ENCODE measurements at regions of chr12 and their contacts with region 1.

Region 1: DNA sequence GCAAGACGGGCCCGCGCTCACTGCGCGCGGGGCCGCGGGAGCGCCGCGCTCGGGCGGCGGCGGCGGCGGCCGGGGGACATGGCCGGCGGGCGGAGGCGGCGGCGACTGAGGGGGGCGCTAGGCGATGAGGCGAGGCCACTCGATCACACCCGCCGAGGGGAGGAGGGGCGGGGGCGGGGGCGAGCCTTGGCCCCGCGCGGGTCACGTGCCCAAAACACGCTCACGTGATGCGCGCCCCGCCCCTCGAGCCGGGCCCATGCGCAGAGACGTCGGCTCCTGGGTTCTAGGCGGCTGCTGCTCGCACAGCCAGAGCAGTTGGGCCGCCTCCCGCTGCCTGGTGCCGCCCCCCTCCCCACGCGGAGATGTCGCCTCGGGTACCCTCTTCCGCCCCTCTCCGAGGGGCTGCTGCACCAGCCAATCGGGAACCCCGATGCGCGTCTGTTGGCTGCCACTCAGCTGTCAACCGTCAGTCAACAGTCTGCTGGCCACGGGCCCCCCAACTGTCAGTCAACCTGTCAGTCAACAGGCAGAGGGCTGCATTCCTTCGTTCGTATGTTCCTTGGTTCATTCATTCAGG is at the start of gene SPPL3:
- DNase-seq: peak; percentile 79 to 96 (median 87)
- ATAC-seq: peak; percentile 93
- H3K4me3 ChIP-seq: peak within 1 kb of the TSS; percentile 88
- H3K4me3 Mint-ChIP-seq: peak within 1 kb of the TSS; percentile 95 to 100 (median 99)
- H3K27ac ChIP-seq: peak within 1 kb of the TSS; percentile 90
- H3K27ac Mint-ChIP-seq: peak within 1 kb of the TSS; percentile 92 to 99 (median 95)
- H3K4me1 ChIP-seq: peaks cover 6 to 14% of the 10 kb centered on the region in 2 donors
- H3K4me1 Mint-ChIP-seq: peaks cover 25 to 42% (median 34%) of the 10 kb centered on the region in 7 donors
- H3K27me3 ChIP-seq: no peaks in the 10 kb centered on the region
- H3K27me3 Mint-ChIP-seq: no peaks in the 10 kb centered on the region
- total RNA-seq, gene SPPL3: 34.9 to 51.8 (median 48.2) TPM

Region 2: GRCh38 chr12:120534203-120534702 is 370.0 kb before region 1 on chr12 and contains the start of gene RNF10:
- CTCF ChIA-PET with region 1: interaction called, 5 read pairs
- POLR2A ChIA-PET with region 1: no interaction called
- intact Hi-C with region 1: loop called in 1 of 2 experiments (anchors 1 kb)
- DNase-seq: peak; percentile 61 to 88 (median 85)
- ATAC-seq: peak; percentile 84
- H3K4me3 ChIP-seq: peak within 1 kb of the TSS; percentile 92
- H3K4me3 Mint-ChIP-seq: peak within 1 kb of the TSS; percentile 87 to 98 (median 96)
- H3K27ac ChIP-seq: peak within 1 kb of the TSS; percentile 97
- H3K27ac Mint-ChIP-seq: peak within 1 kb of the TSS; percentile 90 to 95 (median 95)
- H3K4me1 ChIP-seq: peaks cover 34 to 40% of the 10 kb centered on the region in 2 donors
- H3K4me1 Mint-ChIP-seq: peaks cover 28 to 57% (median 54%) of the 10 kb centered on the region in 7 donors
- H3K27me3 ChIP-seq: no peaks in the 10 kb centered on the region
- H3K27me3 Mint-ChIP-seq: peaks cover 0 to 2% (median 0%) of the 10 kb centered on the region in 5 donors
- total RNA-seq, gene RNF10: 171 to 361 (median 205) TPM

Region 3: DNA sequence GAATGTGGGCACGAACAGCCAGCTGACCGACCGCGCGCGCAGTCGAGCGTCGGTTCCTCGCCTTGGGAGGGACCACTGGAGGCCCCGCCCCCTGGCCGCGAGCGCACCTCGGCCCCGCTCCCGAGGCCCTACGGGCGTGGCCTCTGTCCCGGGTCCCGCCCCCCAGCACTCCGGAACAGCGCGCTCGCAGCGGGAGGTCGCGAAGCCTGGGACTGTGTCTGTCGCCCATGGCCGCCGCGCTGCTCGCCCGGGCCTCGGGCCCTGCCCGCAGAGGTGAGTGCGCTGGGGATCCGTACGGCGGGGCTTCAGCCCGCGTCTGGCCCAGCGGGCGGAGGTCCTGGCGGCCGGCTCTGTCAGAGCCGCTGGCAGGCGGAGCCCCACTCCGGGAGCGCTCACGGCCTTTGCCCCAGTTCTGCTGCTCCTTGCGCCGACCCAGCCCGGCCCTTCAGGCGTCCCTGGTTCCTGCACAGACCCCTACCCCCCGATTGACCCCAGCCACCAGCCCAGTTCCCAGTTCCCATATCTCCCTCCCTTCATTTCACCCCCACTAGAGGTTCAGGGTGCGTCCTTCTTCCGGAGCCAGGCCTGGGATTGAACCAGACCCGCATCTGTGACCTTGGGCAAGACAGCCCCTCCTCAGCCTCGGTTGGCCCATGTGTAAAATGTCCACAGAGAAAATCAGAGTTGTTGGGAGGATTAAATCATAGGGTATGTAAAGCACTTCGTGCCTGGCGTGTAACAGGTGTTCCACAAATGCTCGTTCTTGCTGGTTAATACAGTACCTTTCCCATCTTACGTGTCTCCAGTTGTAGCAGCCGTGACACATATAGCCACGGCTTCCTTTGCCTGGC is 178.4 kb before region 1 on chr12 and contains the start of gene ACADS:
- CTCF ChIA-PET with region 1: no interaction called
- POLR2A ChIA-PET with region 1: no interaction called
- intact Hi-C with region 1: loop called (anchors 2 kb)
- DNase-seq: peak; percentile 78 to 94 (median 85)
- ATAC-seq: peak; percentile 100
- H3K4me3 ChIP-seq: peak within 1 kb of the TSS; percentile 78
- H3K4me3 Mint-ChIP-seq: peak within 1 kb of the TSS; percentile 88 to 98 (median 94)
- H3K27ac ChIP-seq: peak within 1 kb of the TSS; percentile 76
- H3K27ac Mint-ChIP-seq: peak within 1 kb of the TSS; percentile 56 to 95 (median 82)
- H3K4me1 ChIP-seq: peaks cover 12 to 13% of the 10 kb centered on the region in 2 donors
- H3K4me1 Mint-ChIP-seq: peaks cover 6 to 28% (median 23%) of the 10 kb centered on the region in 7 donors
- H3K27me3 ChIP-seq: no peaks in the 10 kb centered on the region
- H3K27me3 Mint-ChIP-seq: no peaks in the 10 kb centered on the region
- total RNA-seq, gene ACADS: 10.4 to 18.1 (median 15.7) TPM

Region 4: DNA sequence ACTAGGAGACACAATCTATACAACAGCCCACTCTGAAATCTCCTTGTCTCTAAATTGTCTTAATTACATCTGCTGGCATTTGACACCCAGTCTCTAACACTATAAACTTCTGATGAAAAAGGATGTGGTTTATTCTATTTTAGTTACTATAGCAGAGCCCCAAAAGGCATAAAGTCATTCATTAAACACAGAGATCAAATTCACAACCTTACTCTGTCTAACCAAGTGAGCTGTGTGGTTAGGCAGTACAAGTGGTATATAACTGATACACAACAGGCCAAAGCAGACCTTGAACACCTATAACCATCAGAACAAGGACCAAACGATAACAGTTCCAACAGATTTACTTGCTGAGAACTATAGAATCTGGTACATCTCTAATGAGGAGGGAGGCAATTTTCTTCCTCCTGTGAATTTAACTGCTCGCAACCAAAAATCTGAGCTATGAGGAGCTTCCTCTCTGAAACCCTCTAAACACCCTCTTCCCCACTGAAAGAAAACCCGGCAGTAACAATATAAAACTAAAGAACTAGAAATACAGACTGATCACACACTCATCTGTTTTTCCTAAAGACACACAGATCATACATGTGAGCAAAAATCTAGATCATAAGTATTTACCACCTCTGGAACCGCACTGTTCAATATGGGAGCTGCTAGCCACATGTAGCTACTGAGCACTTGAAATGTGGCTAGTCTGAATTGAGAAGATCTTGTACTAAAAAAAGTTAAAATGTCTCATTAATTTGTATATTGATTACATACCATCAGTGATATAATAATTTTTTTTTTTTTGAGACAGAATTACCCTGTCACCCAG is 17.9 kb before region 1 on chr12:
- CTCF ChIA-PET with region 1: interaction called, 3 read pairs
- POLR2A ChIA-PET with region 1: interaction called, 3 read pairs
- intact Hi-C with region 1: loop called (anchors 1 to 2 kb)
- DNase-seq: peak in 5 of 9 donors; percentile 5 to 39 (median 18)
- ATAC-seq: peak; percentile 86
- H3K4me3 ChIP-seq: no peak overlapping the region
- H3K4me3 Mint-ChIP-seq: peak overlapping the region; percentile 39 to 73 (median 54)
- H3K27ac ChIP-seq: no peak overlapping the region
- H3K27ac Mint-ChIP-seq: peak overlapping the region; percentile 1 to 76 (median 22)
- H3K4me1 ChIP-seq: peaks cover 23 to 29% of the 10 kb centered on the region in 2 donors
- H3K4me1 Mint-ChIP-seq: peaks cover 32 to 89% (median 82%) of the 10 kb centered on the region in 7 donors
- H3K27me3 ChIP-seq: no peaks in the 10 kb centered on the region
- H3K27me3 Mint-ChIP-seq: no peaks in the 10 kb centered on the region

Region 5: DNA sequence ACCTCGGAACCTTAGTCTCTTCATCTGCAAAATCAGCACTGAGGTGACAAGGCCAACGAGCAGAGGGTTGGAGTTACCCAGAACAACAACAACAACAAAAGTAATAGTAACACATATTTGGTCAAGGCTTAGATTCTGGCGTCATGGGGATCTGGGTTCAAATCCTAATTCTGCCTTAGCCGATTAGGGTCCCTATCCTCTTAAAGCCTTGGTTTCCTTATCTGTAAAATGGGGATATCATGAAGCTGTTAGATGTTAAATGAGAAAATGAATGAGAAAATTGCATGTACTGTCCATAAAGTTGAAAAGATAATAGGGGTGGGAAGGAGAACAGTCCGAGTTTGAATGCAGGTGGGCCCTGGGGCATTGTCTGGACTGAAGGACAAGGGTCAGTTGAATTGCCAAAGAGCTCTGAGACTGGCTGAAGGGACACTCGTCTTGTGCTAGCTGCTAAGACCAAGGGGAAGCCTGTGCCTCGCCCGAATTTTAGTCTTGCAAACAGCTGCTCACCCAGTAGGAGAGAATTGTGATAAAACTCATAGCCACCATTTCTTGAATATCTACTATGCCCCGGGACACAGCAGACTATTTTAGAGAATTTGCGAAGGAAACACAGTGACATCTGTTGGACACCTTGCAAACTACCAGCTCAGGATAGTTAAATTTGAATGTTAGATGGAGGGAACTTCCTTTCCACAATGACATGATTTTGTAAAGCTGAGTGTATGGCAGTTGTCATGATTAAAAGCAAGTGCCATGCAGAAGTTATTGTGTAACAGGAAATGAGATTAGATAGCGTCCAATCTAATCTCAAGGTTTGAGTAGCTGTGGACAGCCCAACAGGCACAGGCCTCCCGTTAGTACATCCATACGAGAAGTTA is 67.3 kb after region 1 on chr12:
- CTCF ChIA-PET with region 1: no interaction called
- POLR2A ChIA-PET with region 1: no interaction called
- intact Hi-C with region 1: loop called in 1 of 2 experiments (anchors 2 kb)
- DNase-seq: peak in 8 of 9 donors; percentile 25 to 75 (median 63)
- ATAC-seq: peak; percentile 95
- H3K4me3 ChIP-seq: no peak overlapping the region
- H3K4me3 Mint-ChIP-seq: no peak overlapping the region
- H3K27ac ChIP-seq: no peak overlapping the region
- H3K27ac Mint-ChIP-seq: peak overlapping the region in 1 of 9 donors; percentile 77
- H3K4me1 ChIP-seq: no peaks in the 10 kb centered on the region
- H3K4me1 Mint-ChIP-seq: peaks cover 0 to 8% (median 7%) of the 10 kb centered on the region in 7 donors
- H3K27me3 ChIP-seq: no peaks in the 10 kb centered on the region
- H3K27me3 Mint-ChIP-seq: peaks cover 0 to 3% (median 0%) of the 10 kb centered on the region in 5 donors

Region 6: DNA sequence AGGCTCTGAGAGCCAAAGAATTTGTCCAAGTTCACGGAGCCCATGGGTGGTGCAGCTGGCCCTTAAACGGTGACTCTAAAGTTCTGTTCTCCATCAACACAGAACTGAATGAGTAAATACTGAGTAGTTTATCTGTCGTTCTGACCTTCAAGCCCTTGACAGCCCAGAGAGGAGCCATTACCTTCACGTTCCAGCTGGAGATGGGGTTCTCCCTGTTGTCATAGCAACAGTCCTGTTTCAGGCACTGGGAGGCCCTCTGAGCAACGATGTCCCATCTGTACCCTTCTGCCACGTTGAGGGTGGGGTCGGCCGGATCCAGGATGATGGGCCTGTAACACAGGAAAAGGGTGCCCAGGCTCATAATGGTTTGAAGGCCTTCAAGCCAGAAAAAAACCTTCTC is 119.5 kb after region 1 on chr12:
- CTCF ChIA-PET with region 1: no interaction called
- POLR2A ChIA-PET with region 1: no interaction called
- intact Hi-C with region 1: no loop called
- DNase-seq: no peak
- ATAC-seq: no peak
- H3K4me3 ChIP-seq: no peak overlapping the region
- H3K4me3 Mint-ChIP-seq: no peak overlapping the region
- H3K27ac ChIP-seq: no peak overlapping the region
- H3K27ac Mint-ChIP-seq: no peak overlapping the region
- H3K4me1 ChIP-seq: no peaks in the 10 kb centered on the region
- H3K4me1 Mint-ChIP-seq: peaks cover 0 to 8% (median 0%) of the 10 kb centered on the region in 7 donors
- H3K27me3 ChIP-seq: no peaks in the 10 kb centered on the region
- H3K27me3 Mint-ChIP-seq: no peaks in the 10 kb centered on the region

Region 7: DNA sequence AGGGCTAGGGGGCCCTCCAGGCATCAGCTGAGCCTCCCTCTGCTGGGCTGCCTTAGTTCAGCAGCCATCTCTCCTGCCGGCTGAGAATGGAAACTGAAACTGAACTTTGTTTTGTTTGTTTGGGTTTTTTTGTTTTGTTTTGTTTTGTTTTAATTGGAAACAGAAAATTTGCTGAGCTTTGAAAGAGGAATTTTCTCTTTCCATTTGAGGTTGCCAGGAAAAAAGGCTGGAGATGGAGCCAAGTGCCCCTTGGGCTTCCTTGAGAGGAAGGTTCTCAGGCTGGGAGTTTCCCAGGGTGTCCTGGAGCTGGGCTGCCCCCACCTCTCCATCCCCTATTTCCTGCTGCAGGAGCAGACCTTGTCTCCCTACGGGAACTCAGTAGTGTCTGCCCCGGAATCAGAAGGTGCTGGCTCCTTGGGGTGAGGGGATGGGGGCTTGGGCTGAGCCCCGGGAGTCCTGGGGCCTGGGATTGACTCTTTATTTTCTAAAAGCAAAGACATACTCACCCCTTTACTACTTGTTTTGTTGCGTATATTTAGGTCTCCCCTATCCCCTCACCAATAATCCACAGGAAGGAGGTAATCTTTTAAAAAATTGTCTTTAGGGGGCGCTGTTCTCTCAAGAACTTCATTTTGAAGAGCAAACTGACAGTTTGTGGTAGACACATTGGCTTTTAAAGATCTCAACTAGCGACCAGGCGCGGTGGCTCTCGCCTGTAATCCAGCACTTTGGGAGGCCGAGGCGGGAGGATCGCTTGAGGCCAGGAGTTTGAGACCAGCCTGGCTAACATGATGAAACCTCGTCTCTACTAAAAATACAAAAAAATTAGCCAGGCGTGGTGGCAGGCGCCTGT is 156.1 kb after region 1 on chr12:
- CTCF ChIA-PET with region 1: no interaction called
- POLR2A ChIA-PET with region 1: no interaction called
- intact Hi-C with region 1: loop called in 1 of 2 experiments (anchors 1 kb)
- DNase-seq: peak; percentile 28 to 78 (median 67)
- ATAC-seq: peak; percentile 97
- H3K4me3 ChIP-seq: peak overlapping the region; percentile 74
- H3K4me3 Mint-ChIP-seq: peak overlapping the region; percentile 73 to 91 (median 85)
- H3K27ac ChIP-seq: peak overlapping the region; percentile 56
- H3K27ac Mint-ChIP-seq: peak overlapping the region; percentile 75 to 98 (median 91)
- H3K4me1 ChIP-seq: peaks cover 7 to 11% of the 10 kb centered on the region in 2 donors
- H3K4me1 Mint-ChIP-seq: peaks cover 9 to 31% (median 17%) of the 10 kb centered on the region in 7 donors
- H3K27me3 ChIP-seq: no peaks in the 10 kb centered on the region
- H3K27me3 Mint-ChIP-seq: no peaks in the 10 kb centered on the region